Caco-2 (cell line): ENCODE measurements at regions of chr2 and their contacts with region 1.

Region 1: DNA sequence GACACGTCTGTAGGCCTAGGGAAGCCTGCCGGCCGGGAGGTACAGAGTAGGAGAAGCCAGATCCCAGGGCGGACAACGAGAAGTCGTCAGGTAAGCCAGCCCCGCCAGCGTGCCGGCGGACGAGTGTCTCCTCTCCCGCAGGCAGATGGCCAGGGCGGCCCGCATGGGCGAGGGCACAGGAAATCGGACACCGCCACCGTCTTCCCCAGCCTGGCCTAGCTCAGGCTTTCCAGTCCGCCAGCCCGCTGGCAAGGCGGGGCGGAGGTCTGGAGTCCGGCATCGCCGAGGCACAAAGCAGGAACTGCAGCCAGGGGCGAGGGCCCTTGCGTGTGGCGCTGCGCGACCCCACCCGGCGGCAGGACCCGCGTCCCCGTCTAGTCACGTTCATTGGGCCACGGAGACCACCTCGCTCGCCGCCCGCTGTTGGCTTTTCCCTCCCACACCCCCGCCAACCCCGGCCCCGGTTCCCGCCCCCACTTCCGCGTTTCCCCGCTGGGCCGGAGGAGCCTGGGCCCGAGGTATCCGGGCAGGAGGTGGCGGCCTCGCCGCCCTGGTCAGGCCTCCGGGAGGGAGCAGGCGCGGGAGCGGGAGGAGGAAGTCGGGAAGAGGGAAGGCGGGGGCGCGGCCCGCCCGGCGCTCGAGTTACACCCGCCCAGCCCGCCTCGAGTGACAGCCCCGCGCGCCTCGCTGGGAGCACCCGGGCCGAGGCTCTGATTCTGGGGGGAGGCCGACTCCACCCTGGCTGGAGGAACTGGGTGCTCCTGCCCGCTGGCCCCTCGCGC is at the start of gene GPD2:
- DNase-seq: peak; percentile 93 to 94
- H3K4me3 ChIP-seq: peak within 1 kb of the TSS; percentile 48
- H3K4me3 Mint-ChIP-seq: peak within 1 kb of the TSS; percentile 90
- H3K27ac Mint-ChIP-seq: peak within 1 kb of the TSS; percentile 83
- H3K4me1 ChIP-seq: peaks cover 27% of the 10 kb centered on the region
- H3K4me1 Mint-ChIP-seq: peaks cover 17% of the 10 kb centered on the region
- H3K27me3 ChIP-seq: no peaks in the 10 kb centered on the region
- H3K27me3 Mint-ChIP-seq: no peaks in the 10 kb centered on the region
- CTCF ChIP-seq: peak in 1 of 2 experiments; percentile 36
- total RNA-seq, gene GPD2: 56.8 and 58.3 TPM in 2 replicates

Region 2: DNA sequence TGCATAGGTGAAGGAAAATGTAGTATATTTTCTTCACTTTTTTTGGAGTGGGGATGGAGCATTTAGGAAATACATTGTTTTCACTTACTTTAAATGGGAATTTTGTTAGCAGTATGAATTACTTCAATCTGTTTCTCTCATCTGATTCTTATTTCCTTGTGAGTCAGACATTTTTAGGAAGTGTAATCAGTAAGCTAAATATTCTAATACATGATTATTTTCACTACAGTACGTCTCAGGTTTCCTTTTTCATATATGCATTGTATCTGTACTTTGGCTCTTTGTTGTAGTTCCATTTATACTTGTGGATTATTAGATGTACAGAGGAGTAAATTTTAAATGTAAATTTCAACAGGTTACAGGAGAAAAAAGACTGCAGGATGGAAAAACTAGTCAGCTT is 28.2 kb after region 1 on chr2:
- CTCF ChIA-PET with region 1: no interaction called
- POLR2A ChIA-PET with region 1: interaction called, 3 read pairs
- intact Hi-C with region 1: loop called (anchors 1 kb)
- DNase-seq: no peak
- H3K4me3 ChIP-seq: no peak overlapping the region
- H3K4me3 Mint-ChIP-seq: no peak overlapping the region
- H3K27ac Mint-ChIP-seq: no peak overlapping the region
- H3K4me1 ChIP-seq: peaks cover 64% of the 10 kb centered on the region
- H3K4me1 Mint-ChIP-seq: peaks cover 57% of the 10 kb centered on the region
- H3K27me3 ChIP-seq: no peaks in the 10 kb centered on the region
- H3K27me3 Mint-ChIP-seq: no peaks in the 10 kb centered on the region
- CTCF ChIP-seq: no peak

Region 3: DNA sequence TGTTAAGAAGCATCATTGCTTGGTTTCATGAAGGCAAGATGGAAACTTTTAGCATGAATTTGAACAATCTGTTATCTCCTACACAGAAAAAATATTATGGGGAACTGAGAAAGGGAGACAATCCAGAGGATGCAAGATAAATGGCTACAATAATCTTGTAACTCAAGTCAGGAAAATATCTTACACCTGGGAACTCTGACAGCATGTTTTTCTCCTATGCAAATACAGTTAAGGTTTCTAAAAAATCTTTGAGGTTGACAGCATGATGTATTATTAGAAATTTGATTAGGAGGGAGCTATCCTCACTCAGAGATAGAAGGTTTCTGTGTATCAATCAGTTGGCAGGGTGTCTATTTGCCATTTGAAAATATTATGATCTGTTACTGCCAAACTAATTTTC is 75.9 kb after region 1 on chr2:
- CTCF ChIA-PET with region 1: no interaction called
- POLR2A ChIA-PET with region 1: no interaction called
- intact Hi-C with region 1: loop called (anchors 5 kb)
- DNase-seq: no peak
- H3K4me3 ChIP-seq: no peak overlapping the region
- H3K4me3 Mint-ChIP-seq: no peak overlapping the region
- H3K27ac Mint-ChIP-seq: no peak overlapping the region
- H3K4me1 ChIP-seq: no peaks in the 10 kb centered on the region
- H3K4me1 Mint-ChIP-seq: no peaks in the 10 kb centered on the region
- H3K27me3 ChIP-seq: no peaks in the 10 kb centered on the region
- H3K27me3 Mint-ChIP-seq: no peaks in the 10 kb centered on the region
- CTCF ChIP-seq: no peak